GM10248 (cell line): ENCODE measurements at regions of chr9 and their contacts with region 1.

Region 1: GRCh38 chr9:36995927-36996705 is 38.0 kb downstream of the PAX5 start:
- DNase-seq: peak; percentile 68
- CTCF ChIP-seq: peak; percentile 75

Region 2: DNA sequence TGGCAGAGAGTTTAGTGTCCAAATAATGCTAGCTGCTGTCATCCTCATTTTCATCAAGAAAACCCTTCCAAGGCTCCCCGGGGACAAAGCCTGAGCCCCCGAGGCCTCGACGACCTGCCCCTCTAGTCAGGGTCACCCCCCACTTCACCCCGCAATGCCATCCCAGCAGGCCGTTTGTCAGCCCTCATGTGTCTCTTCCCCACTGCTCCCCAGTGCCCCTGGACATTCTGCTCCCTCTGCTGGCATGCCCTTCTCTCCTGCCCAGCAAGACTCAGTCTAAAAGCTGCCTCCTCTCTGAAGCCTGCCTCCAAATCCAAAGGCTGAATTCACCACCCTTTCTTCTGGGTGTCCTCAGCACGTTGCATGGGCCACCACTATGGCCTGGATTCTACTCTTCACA is 21.4 kb before region 1 on chr9:
- CTCF ChIA-PET with region 1: interaction called, 30 read pairs
- POLR2A ChIA-PET with region 1: no interaction called
- DNase-seq: no peak
- CTCF ChIP-seq: no peak

Region 3: DNA sequence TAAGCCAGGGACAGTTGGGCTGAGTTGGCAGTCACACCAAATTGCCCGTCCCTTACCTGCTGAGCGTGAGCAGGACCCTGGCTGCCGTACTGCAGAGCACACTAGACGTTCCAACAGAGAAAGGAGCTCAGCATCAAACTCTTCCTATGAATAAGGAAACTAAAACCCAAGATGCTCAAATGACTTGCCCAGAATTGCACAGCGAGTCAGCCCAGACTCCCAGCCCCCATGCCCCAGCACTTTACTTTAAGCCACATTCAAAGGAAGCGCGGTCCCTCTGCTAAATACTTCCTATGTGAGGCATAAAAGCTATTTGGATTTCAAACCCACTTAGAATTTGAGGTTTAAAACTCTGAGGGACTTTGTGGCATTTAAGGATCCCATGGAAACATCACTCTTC is 14.1 kb after region 1 on chr9:
- CTCF ChIA-PET with region 1: interaction called, 72 read pairs
- POLR2A ChIA-PET with region 1: interaction called, 3 read pairs
- DNase-seq: peak; percentile 46
- CTCF ChIP-seq: no peak

Region 4: DNA sequence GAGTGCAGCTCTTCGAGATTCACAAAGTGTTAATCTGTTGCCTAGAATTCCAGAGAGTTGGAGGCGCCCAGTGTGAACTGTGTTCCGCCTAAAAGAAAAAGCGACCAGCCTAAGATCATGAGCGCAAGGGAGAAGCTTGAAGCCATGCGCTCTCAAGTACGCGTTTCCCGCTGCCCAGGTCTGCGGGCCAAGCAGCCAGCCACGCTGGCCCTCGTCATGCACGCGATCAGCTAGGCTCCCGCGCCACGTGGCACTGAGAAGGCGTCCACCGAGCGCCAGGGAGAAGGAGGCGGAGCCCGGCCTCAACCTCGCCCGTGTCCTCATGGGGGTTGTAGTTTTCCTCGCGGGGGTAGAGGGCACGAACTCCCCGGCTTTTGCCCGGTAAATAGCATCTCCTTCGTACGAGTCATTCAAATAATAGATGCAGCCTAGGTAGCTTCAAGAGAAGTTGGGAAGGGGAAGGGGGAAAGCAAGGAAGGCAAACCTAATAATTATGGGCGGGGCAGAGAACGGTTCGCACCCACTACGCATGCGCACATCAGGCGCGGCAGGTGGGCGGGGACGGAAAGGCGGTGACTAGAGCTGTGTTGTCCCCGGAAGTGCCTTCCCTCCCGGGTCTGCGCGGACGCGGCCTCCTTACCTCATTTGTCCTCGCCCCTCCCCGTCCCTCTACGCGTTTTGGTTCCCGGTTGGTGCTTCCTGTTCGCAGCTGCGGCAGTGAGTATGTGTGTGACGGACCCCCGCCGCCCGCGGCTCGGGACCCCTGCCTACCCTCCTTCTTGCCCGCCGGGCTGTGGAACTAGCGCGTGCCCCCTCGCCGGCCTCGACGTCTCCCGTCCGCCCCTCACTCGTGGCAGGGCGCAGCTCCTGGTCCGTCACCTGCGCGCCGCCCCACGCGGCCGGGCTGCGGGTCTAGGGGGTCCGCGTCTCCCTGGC is 124.1 kb after region 1 on chr9 and contains the start of gene ZCCHC7:
- CTCF ChIA-PET with region 1: interaction called, 10 read pairs
- POLR2A ChIA-PET with region 1: no interaction called
- DNase-seq: peak; percentile 99
- CTCF ChIP-seq: no peak

Region 5: DNA sequence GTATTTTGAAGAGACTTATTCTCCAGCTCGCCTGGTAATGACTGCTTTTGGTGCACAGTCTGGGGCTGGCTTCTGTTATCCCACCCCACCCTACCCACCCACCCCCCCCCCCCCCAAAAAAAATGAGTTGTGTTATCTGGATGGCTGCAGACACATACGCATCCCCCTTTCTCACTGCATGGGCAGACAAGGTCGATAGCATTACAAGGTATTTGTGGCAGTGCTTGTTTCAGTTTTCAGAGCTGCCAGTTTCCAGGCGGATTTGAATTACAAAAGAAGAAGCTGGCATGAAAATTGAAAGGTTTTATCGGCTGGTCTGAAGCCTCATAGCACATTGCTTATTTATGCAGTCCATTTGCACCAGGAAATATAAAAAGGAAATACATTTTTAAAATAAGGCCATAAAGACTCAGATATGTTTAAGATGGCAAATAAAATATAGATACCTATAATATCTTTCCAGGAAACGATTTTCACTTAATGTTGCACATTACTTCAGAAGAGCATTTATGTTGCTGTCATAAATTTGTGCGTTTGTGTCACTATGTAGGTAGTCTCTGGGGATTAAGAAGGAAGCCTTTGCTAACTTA is 341.3 kb after region 1 on chr9:
- CTCF ChIA-PET with region 1: interaction called, 10 read pairs
- POLR2A ChIA-PET with region 1: no interaction called
- DNase-seq: no peak
- CTCF ChIP-seq: no peak